Activated CD4-positive, alpha-beta T cell treated with anti-CD3 and anti-CD28 coated beads for 36 hours (primary cell): ENCODE measurements at regions of chr4 and their contacts with region 1.

Region 1: GRCh38 chr4:182917182-182918043 is at the start of gene DCTD:
- DNase-seq: peak; percentile 89
- ATAC-seq: peak; percentile 69
- H3K4me3 Mint-ChIP-seq: peak within 1 kb of the TSS; percentile 79
- H3K27ac Mint-ChIP-seq: peak within 1 kb of the TSS; percentile 95
- H3K4me1 Mint-ChIP-seq: peaks cover 48% of the 10 kb centered on the region
- H3K27me3 Mint-ChIP-seq: no peaks in the 10 kb centered on the region
- total RNA-seq, gene DCTD: 119 to 128 TPM

Region 2: GRCh38 chr4:182495031-182495430 is 422.4 kb before region 1 on chr4:
- CTCF ChIA-PET with region 1: no interaction called
- POLR2A ChIA-PET with region 1: no interaction called
- intact Hi-C with region 1: no loop called
- DNase-seq: no peak
- ATAC-seq: no peak
- H3K4me3 Mint-ChIP-seq: no peak overlapping the region
- H3K27ac Mint-ChIP-seq: no peak overlapping the region
- H3K4me1 Mint-ChIP-seq: peaks cover 11% of the 10 kb centered on the region
- H3K27me3 Mint-ChIP-seq: peaks cover 15% of the 10 kb centered on the region

Region 3: GRCh38 chr4:183098723-183099536 is 181.5 kb after region 1 on chr4 and contains the start of gene WWC2:
- CTCF ChIA-PET with region 1: interaction called, 4 read pairs
- POLR2A ChIA-PET with region 1: no interaction called
- intact Hi-C with region 1: loop called in 1 of 2 experiments (anchors 1 kb)
- DNase-seq: peak; percentile 75
- ATAC-seq: peak; percentile 75
- H3K4me3 Mint-ChIP-seq: peak within 1 kb of the TSS; percentile 59
- H3K27ac Mint-ChIP-seq: no peak within 1 kb of the TSS
- H3K4me1 Mint-ChIP-seq: peaks cover 5% of the 10 kb centered on the region
- H3K27me3 Mint-ChIP-seq: peaks cover 33% of the 10 kb centered on the region
- total RNA-seq, gene WWC2: 3.6 to 4.3 TPM

Region 4: GRCh38 chr4:183272384-183272783 is 355.0 kb after region 1 on chr4:
- CTCF ChIA-PET with region 1: no interaction called
- POLR2A ChIA-PET with region 1: no interaction called
- intact Hi-C with region 1: no loop called
- DNase-seq: no peak
- ATAC-seq: no peak
- H3K4me3 Mint-ChIP-seq: no peak overlapping the region
- H3K27ac Mint-ChIP-seq: no peak overlapping the region
- H3K4me1 Mint-ChIP-seq: no peaks in the 10 kb centered on the region
- H3K27me3 Mint-ChIP-seq: no peaks in the 10 kb centered on the region

Region 5: DNA sequence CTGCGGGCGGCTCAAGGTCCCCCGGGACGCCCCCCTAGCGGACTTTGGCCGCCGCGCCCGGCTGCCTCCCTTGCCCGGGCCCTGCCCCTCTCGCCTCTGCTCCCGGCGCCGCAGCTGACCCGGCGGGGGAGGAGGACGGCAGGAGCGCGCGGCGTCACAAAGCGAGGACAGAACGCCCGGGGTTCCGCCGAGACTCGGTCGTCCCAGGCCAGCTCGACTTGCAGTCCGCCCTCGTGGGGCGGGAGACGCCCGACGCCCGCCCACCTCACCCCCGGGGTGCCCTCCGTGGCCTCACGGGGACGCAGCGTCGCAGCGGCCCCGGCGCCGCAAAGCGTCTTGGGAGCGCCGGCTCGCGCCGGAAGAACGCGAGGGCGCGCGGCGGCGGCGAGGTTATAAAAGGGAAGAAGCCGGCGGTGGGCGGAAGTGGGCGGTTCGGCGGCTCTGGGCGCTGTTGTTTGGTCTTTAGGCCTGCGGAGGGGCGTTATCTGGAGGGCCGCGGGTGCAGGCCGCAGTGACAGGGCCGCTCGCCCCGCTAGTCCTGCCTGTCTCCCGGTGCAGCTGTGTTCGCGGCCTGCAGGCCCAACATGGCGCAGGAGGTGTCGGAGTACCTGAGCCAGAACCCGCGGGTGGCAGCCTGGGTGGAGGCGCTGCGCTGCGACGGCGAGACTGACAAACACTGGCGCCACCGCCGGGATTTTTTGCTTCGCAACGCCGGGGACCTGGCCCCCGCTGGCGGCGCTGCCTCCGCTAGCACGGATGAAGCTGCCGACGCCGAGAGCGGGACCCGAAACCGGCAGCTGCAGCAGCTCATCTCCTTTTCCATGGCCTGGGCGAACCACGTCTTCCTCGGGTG is 527.0 kb after region 1 on chr4 and contains the start of gene CDKN2AIP:
- CTCF ChIA-PET with region 1: no interaction called
- POLR2A ChIA-PET with region 1: no interaction called
- intact Hi-C with region 1: loop called (anchors 2 to 5 kb)
- DNase-seq: peak; percentile 95
- ATAC-seq: peak; percentile 87
- H3K4me3 Mint-ChIP-seq: peak within 1 kb of the TSS; percentile 97
- H3K27ac Mint-ChIP-seq: peak within 1 kb of the TSS; percentile 97
- H3K4me1 Mint-ChIP-seq: peaks cover 42% of the 10 kb centered on the region
- H3K27me3 Mint-ChIP-seq: no peaks in the 10 kb centered on the region
- total RNA-seq, gene CDKN2AIP: 19.4 to 22.8 TPM